H1 (cell line): ENCODE measurements at regions of chr12 and their contacts with region 1.

Region 1: DNA sequence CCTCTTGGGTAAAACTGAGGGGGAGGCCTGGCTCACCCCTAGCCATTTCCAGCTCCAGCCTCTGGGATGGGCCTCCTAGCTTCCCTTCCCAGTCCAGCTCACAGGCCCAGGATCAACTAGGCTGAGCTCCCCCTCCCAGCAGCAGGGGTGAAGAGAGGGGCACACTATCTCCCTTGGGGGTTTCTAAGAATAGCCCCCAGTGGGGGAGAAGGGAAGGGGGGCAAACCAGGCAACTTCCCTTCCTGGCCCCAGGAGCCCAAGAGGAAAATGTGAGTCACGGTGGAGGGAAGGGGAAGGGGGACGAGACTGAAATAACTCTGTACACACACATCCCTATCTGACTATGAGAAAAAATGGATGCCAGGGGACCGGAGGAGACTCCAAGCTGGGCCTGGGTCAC is 9.0 kb downstream of the ADCY6 start:
- DNase-seq: no peak
- H3K4me3 ChIP-seq: no peak overlapping the region
- H3K27ac ChIP-seq: no peak overlapping the region
- H3K4me1 ChIP-seq: peaks cover 0 to 14% (median 11%) of the 10 kb centered on the region in 4 experiments; a peak in 6 of 7 replicates
- H3K27me3 ChIP-seq: no peaks in the 10 kb centered on the region
- CTCF ChIP-seq: no peak
- EP300 ChIP-seq: no peak
- POLR2A ChIP-seq: no peak
- RAD21 ChIP-seq: no peak

Region 2: GRCh38 chr12:48758221-48758620 is 21.6 kb before region 1 on chr12:
- CTCF ChIA-PET with region 1: interaction called, 24 read pairs
- POLR2A ChIA-PET with region 1: interaction called, 4 read pairs
- DNase-seq: no peak
- H3K4me3 ChIP-seq: no peak overlapping the region
- H3K27ac ChIP-seq: no peak overlapping the region
- H3K4me1 ChIP-seq: no peaks in the 10 kb centered on the region
- H3K27me3 ChIP-seq: no peaks in the 10 kb centered on the region
- CTCF ChIP-seq: no peak
- EP300 ChIP-seq: no peak
- POLR2A ChIP-seq: no peak
- RAD21 ChIP-seq: no peak

Region 3: GRCh38 chr12:48814262-48815125 is 34.6 kb after region 1 on chr12:
- CTCF ChIA-PET with region 1: interaction called, 11 read pairs
- POLR2A ChIA-PET with region 1: no interaction called
- DNase-seq: peak in 1 of 2 experiments; percentile 94
- H3K4me3 ChIP-seq: peak overlapping the region; percentile 59 to 94 (median 88)
- H3K27ac ChIP-seq: no peak overlapping the region
- H3K4me1 ChIP-seq: peaks cover 0 to 27% (median 19%) of the 10 kb centered on the region in 4 experiments; a peak in 6 of 7 replicates
- H3K27me3 ChIP-seq: peaks cover 17 to 46% (median 36%) of the 10 kb centered on the region in 4 experiments
- CTCF ChIP-seq: peak in 2 of 3 experiments; percentile 95 to 99; a peak in 3 of 4 replicates
- EP300 ChIP-seq: no peak; a peak in 1 of 3 replicates
- POLR2A ChIP-seq: no peak
- RAD21 ChIP-seq: peak in 1 of 2 experiments; percentile 48; a peak in 2 of 4 replicates